ENCODE measurements at regions of chr3 and their contacts with region 1.

Region 1: DNA sequence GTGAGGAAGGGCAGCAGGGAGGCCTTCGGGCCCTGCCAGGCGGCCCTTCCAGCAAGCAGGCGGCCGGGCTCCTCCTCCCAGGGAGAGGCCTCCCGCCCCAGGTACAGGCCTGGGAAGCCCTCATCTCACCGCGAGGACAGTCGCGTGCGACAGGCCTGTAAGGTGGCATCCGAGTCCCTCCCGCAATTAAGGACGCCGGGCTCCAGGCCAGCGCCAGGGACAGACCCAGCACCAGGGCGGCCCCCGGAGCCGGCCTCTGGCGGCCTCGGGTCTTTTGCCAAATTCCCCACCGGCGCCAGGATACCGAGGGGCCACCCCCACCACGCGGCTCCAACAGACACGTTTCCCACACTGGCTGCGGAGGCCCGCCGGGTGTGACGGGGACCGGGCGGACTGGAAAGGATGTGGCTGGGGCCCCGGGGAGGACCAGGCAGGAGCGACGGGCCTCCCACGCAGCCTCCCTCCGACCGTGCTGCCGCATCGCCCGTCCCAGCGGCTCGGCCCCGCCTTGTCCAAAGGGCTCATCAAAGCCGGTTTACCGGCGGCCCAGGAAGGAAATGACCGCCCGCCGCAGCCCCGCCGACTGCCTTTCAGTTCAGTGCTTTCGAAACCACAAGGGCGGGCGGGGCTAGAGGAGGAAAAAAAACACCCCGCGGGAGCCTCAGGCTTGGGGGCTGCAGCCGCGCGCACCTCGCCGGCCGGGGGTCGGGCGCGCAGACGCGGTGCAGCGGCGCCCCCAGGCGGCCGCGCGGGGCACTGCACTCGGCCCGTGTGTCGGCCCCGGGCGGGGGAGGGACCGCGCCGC is 11.3 kb downstream of the XXYLT1 start:
- DNase-seq: peak; percentile 73 to 96 (median 84)
- ATAC-seq: peak; percentile 83
- H3K4me3 ChIP-seq: peak overlapping the region; percentile 92
- H3K4me3 Mint-ChIP-seq: peak overlapping the region; percentile 67
- H3K27ac ChIP-seq: peak overlapping the region; percentile 85 to 93
- H3K27ac Mint-ChIP-seq: peak overlapping the region; percentile 93
- H3K4me1 ChIP-seq: peaks cover 35% of the 10 kb centered on the region
- H3K4me1 Mint-ChIP-seq: peaks cover 22% of the 10 kb centered on the region
- H3K27me3 ChIP-seq: no peaks in the 10 kb centered on the region
- H3K27me3 Mint-ChIP-seq: no peaks in the 10 kb centered on the region
- CTCF ChIP-seq: peak; percentile 33

Region 2: GRCh38 chr3:194486540-194487288 is 773.0 kb before region 1 on chr3 and contains the start of gene ATP13A3:
- CTCF ChIA-PET with region 1: no interaction called
- POLR2A ChIA-PET with region 1: no interaction called
- intact Hi-C with region 1: loop called (anchors 5 to 10 kb)
- DNase-seq: peak; percentile 78 to 97 (median 90)
- ATAC-seq: peak; percentile 83
- H3K4me3 ChIP-seq: peak within 1 kb of the TSS; percentile 81
- H3K4me3 Mint-ChIP-seq: peak within 1 kb of the TSS; percentile 97
- H3K27ac ChIP-seq: peak within 1 kb of the TSS; percentile 66 to 76
- H3K27ac Mint-ChIP-seq: peak within 1 kb of the TSS; percentile 89
- H3K4me1 ChIP-seq: peaks cover 34% of the 10 kb centered on the region
- H3K4me1 Mint-ChIP-seq: peaks cover 44% of the 10 kb centered on the region
- H3K27me3 ChIP-seq: no peaks in the 10 kb centered on the region
- H3K27me3 Mint-ChIP-seq: no peaks in the 10 kb centered on the region
- CTCF ChIP-seq: no peak
- total RNA-seq, gene ATP13A3: 46.5 to 52.7 TPM

Region 3: GRCh38 chr3:194682694-194683310 is 576.9 kb before region 1 on chr3:
- CTCF ChIA-PET with region 1: interaction called, 9 read pairs
- POLR2A ChIA-PET with region 1: interaction called, 7 read pairs
- intact Hi-C with region 1: loop called (anchors 1 kb)
- DNase-seq: peak; percentile 43 to 86 (median 53)
- ATAC-seq: peak; percentile 81
- H3K4me3 ChIP-seq: no peak overlapping the region
- H3K4me3 Mint-ChIP-seq: peak overlapping the region; percentile 13
- H3K27ac ChIP-seq: no peak overlapping the region
- H3K27ac Mint-ChIP-seq: no peak overlapping the region
- H3K4me1 ChIP-seq: peaks cover 43% of the 10 kb centered on the region
- H3K4me1 Mint-ChIP-seq: peaks cover 34% of the 10 kb centered on the region
- H3K27me3 ChIP-seq: no peaks in the 10 kb centered on the region
- H3K27me3 Mint-ChIP-seq: peaks cover 14% of the 10 kb centered on the region
- CTCF ChIP-seq: peak; percentile 72

Region 4: GRCh38 chr3:194769020-194769643 is 490.5 kb before region 1 on chr3:
- CTCF ChIA-PET with region 1: no interaction called
- POLR2A ChIA-PET with region 1: no interaction called
- intact Hi-C with region 1: loop called in 1 of 2 experiments (anchors 5 kb)
- DNase-seq: peak; percentile 77 to 98 (median 88)
- ATAC-seq: peak; percentile 97
- H3K4me3 ChIP-seq: peak overlapping the region; percentile 43
- H3K4me3 Mint-ChIP-seq: peak overlapping the region; percentile 87
- H3K27ac ChIP-seq: peak overlapping the region; percentile 51 to 65
- H3K27ac Mint-ChIP-seq: peak overlapping the region; percentile 84
- H3K4me1 ChIP-seq: peaks cover 16% of the 10 kb centered on the region
- H3K4me1 Mint-ChIP-seq: peaks cover 22% of the 10 kb centered on the region
- H3K27me3 ChIP-seq: no peaks in the 10 kb centered on the region
- H3K27me3 Mint-ChIP-seq: peaks cover 5% of the 10 kb centered on the region
- CTCF ChIP-seq: no peak

Region 5: DNA sequence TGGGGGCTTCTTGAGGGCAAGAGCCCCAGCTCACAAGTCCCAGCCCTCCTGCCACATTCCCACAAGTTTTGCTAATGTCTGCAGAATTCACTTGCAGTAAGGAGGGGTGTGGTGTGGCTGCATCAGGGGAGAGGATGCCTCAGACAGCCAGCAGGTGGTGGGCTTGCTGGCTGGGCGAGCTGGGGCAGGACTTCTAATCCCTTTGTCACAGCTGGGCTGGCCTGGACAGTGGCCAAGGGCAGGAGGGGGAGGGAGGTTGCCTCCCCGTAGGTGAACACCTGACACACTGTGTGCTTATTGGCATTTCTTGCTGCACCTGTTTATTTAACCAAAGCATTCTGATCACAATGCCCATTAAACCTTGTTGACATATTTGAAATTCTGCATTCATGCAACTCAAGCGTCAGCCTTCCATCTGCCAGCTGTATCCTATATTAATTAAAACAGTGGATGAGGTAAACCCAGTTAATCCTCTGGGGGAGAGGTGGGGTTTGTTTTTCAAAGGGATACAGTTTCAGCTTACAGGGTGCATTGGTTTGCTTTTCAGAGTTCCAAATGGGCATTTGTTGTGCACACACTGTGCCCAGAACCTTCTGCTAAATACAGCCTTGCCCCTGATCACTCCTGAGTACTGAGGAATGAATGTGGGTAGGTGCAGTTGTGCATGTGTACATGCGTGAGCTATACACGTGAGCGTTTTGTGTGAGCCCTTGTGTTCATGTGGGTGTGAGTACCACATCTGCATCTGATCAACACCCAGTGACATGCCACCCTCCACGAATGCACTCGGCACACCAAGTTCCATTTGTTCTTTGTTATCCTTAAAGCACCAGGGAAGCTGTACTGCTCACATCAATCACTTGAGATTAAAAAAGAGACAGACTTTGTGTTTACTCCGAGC is 257.5 kb before region 1 on chr3:
- CTCF ChIA-PET with region 1: interaction called, 4 read pairs
- POLR2A ChIA-PET with region 1: no interaction called
- intact Hi-C with region 1: loop called in 1 of 2 experiments (anchors 5 kb)
- DNase-seq: peak in 7 of 14 experiments; percentile 5 to 50 (median 12)
- ATAC-seq: no peak
- H3K4me3 ChIP-seq: no peak overlapping the region
- H3K4me3 Mint-ChIP-seq: no peak overlapping the region
- H3K27ac ChIP-seq: no peak overlapping the region
- H3K27ac Mint-ChIP-seq: no peak overlapping the region
- H3K4me1 ChIP-seq: no peaks in the 10 kb centered on the region
- H3K4me1 Mint-ChIP-seq: no peaks in the 10 kb centered on the region
- H3K27me3 ChIP-seq: peaks cover 0 to 2% of the 10 kb centered on the region in 2 experiments
- H3K27me3 Mint-ChIP-seq: peaks cover 11% of the 10 kb centered on the region
- CTCF ChIP-seq: peak; percentile 22

Region 6: GRCh38 chr3:195106418-195106906 is 153.2 kb before region 1 on chr3:
- CTCF ChIA-PET with region 1: no interaction called
- POLR2A ChIA-PET with region 1: no interaction called
- intact Hi-C with region 1: loop called in 1 of 2 experiments (anchors 2 kb)
- DNase-seq: peak; percentile 36 to 84 (median 60)
- ATAC-seq: peak; percentile 92
- H3K4me3 ChIP-seq: peak overlapping the region; percentile 6
- H3K4me3 Mint-ChIP-seq: no peak overlapping the region
- H3K27ac ChIP-seq: no peak overlapping the region
- H3K27ac Mint-ChIP-seq: no peak overlapping the region
- H3K4me1 ChIP-seq: peaks cover 8% of the 10 kb centered on the region
- H3K4me1 Mint-ChIP-seq: peaks cover 7% of the 10 kb centered on the region
- H3K27me3 ChIP-seq: no peaks in the 10 kb centered on the region
- H3K27me3 Mint-ChIP-seq: no peaks in the 10 kb centered on the region
- CTCF ChIP-seq: peak; percentile 99

Region 7: GRCh38 chr3:195147649-195148095 is 112.0 kb before region 1 on chr3:
- CTCF ChIA-PET with region 1: no interaction called
- POLR2A ChIA-PET with region 1: interaction called, 3 read pairs
- intact Hi-C with region 1: loop called in 1 of 2 experiments (anchors 10 kb)
- DNase-seq: peak in 5 of 14 experiments; percentile 21 to 68 (median 48)
- ATAC-seq: peak; percentile 59
- H3K4me3 ChIP-seq: peak overlapping the region; percentile 49
- H3K4me3 Mint-ChIP-seq: peak overlapping the region; percentile 78
- H3K27ac ChIP-seq: no peak overlapping the region
- H3K27ac Mint-ChIP-seq: peak overlapping the region; percentile 54
- H3K4me1 ChIP-seq: peaks cover 30% of the 10 kb centered on the region
- H3K4me1 Mint-ChIP-seq: peaks cover 37% of the 10 kb centered on the region
- H3K27me3 ChIP-seq: no peaks in the 10 kb centered on the region
- H3K27me3 Mint-ChIP-seq: peaks cover 4% of the 10 kb centered on the region
- CTCF ChIP-seq: no peak

Region 8: DNA sequence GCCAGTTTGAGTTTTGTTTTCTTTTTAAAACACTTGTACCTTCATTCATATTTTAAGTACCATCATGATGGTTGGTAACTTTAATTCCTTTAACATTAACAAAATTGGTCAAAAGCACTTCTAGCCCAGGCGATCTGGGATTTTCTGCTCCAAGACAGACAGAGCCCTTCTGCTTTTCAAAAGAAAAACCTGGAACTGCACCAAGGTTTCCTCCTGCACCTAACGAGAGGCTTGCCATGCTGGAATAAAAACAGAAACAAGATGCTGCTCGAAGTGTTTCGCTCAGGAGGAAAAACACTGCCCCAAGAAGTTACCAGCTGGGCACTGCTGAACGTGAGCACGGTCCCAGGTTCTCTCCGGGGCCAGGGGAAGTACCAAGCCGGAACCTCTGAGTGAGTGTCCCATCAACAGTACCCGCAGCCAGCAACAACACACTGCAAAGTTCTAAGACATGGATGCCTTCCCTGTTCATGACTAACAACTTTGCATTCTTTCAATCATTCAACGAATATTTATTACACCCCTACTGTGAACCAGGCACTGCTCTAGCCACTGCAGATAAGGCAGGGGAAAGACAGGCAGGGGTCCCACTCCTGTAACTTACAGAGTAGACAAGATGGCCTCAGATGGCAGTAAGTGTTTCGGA is 87.5 kb before region 1 on chr3:
- CTCF ChIA-PET with region 1: no interaction called
- POLR2A ChIA-PET with region 1: no interaction called
- intact Hi-C with region 1: no loop called
- DNase-seq: no peak
- ATAC-seq: no peak
- H3K4me3 ChIP-seq: no peak overlapping the region
- H3K4me3 Mint-ChIP-seq: no peak overlapping the region
- H3K27ac ChIP-seq: no peak overlapping the region
- H3K27ac Mint-ChIP-seq: no peak overlapping the region
- H3K4me1 ChIP-seq: no peaks in the 10 kb centered on the region
- H3K4me1 Mint-ChIP-seq: no peaks in the 10 kb centered on the region
- H3K27me3 ChIP-seq: no peaks in the 10 kb centered on the region
- H3K27me3 Mint-ChIP-seq: no peaks in the 10 kb centered on the region
- CTCF ChIP-seq: no peak